ENCODE measurements at regions of chr11 and their contacts with region 1.

Region 1: GRCh38 chr11:36289226-36289852 is at the start of gene COMMD9:
- DNase-seq: peak; percentile 86 to 96 (median 94)
- ATAC-seq: peak; percentile 96
- H3K4me3 ChIP-seq: peak within 1 kb of the TSS; percentile 65 to 90
- H3K4me3 Mint-ChIP-seq: peak within 1 kb of the TSS; percentile 89
- H3K27ac ChIP-seq: peak within 1 kb of the TSS; percentile 35 to 40
- H3K27ac Mint-ChIP-seq: peak within 1 kb of the TSS; percentile 87
- H3K4me1 ChIP-seq: peaks cover 22% of the 10 kb centered on the region
- H3K4me1 Mint-ChIP-seq: peaks cover 43% of the 10 kb centered on the region
- H3K27me3 ChIP-seq: no peaks in the 10 kb centered on the region
- H3K27me3 Mint-ChIP-seq: no peaks in the 10 kb centered on the region
- CTCF ChIP-seq: no peak
- total RNA-seq, gene COMMD9: 34.1 to 38.1 TPM

Region 2: GRCh38 chr11:34916015-34916842 is 1373.1 kb before region 1 on chr11 and contains the starts of genes APIP and PDHX:
- CTCF ChIA-PET with region 1: no interaction called
- POLR2A ChIA-PET with region 1: no interaction called
- intact Hi-C with region 1: loop called in 1 of 2 experiments (anchors 5 kb)
- DNase-seq: peak; percentile 86 to 96 (median 94)
- ATAC-seq: peak; percentile 89
- H3K4me3 ChIP-seq: peak within 1 kb of the TSS; percentile 70 to 94
- H3K4me3 Mint-ChIP-seq: peak within 1 kb of the TSS; percentile 96
- H3K27ac ChIP-seq: peak within 1 kb of the TSS; percentile 57 to 72
- H3K27ac Mint-ChIP-seq: peak within 1 kb of the TSS; percentile 97
- H3K4me1 ChIP-seq: peaks cover 18% of the 10 kb centered on the region
- H3K4me1 Mint-ChIP-seq: peaks cover 53% of the 10 kb centered on the region
- H3K27me3 ChIP-seq: no peaks in the 10 kb centered on the region
- H3K27me3 Mint-ChIP-seq: no peaks in the 10 kb centered on the region
- CTCF ChIP-seq: no peak
- total RNA-seq, gene APIP: 5.4 to 6.4 TPM
- total RNA-seq, gene PDHX: 20.3 to 21.4 TPM

Region 3: DNA sequence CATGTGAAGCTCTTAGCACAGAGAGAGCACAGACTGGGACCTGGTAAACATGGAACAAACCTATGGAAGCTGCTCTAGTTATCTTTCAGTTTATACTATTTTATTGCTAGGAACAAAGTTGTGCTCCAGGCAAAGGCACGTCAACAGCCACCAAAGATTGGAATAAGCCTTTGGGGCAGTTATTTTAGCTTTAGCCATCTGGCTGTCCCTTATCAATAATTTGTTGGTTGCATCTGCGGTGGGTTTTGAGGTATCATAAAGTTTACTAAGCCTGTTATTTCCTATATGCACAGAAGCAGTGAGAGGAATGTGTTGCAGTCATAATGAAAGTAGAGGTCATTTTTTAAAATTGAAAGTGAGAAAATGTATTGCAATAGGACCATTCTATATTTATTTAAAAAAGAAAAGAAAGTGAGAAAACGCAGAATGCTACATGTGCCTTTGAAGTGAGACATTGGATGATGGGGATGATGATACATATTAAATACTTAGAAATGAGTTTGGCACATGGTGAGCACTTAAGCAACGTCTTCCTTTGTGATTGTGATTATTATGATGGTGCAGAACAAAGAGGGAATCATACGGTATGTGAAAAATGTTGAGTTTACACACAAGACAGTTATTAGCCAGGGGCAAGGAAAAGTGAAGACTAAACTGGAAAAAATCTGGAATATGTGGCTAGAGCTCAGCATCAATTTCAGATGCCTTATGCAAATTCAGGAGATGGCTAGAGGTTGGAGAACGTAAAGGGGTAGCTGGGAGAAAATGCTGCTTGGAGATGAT is 65.1 kb after region 1 on chr11:
- CTCF ChIA-PET with region 1: interaction called, 3 read pairs
- POLR2A ChIA-PET with region 1: no interaction called
- intact Hi-C with region 1: loop called in 1 of 2 experiments (anchors 5 kb)
- DNase-seq: peak in 1 of 9 experiments; percentile 18
- ATAC-seq: no peak
- H3K4me3 ChIP-seq: no peak overlapping the region
- H3K4me3 Mint-ChIP-seq: no peak overlapping the region
- H3K27ac ChIP-seq: no peak overlapping the region
- H3K27ac Mint-ChIP-seq: no peak overlapping the region
- H3K4me1 ChIP-seq: peaks cover 11% of the 10 kb centered on the region
- H3K4me1 Mint-ChIP-seq: peaks cover 28% of the 10 kb centered on the region
- H3K27me3 ChIP-seq: peaks cover 0 to 3% of the 10 kb centered on the region in 2 experiments
- H3K27me3 Mint-ChIP-seq: peaks cover 14% of the 10 kb centered on the region
- CTCF ChIP-seq: no peak

Region 4: DNA sequence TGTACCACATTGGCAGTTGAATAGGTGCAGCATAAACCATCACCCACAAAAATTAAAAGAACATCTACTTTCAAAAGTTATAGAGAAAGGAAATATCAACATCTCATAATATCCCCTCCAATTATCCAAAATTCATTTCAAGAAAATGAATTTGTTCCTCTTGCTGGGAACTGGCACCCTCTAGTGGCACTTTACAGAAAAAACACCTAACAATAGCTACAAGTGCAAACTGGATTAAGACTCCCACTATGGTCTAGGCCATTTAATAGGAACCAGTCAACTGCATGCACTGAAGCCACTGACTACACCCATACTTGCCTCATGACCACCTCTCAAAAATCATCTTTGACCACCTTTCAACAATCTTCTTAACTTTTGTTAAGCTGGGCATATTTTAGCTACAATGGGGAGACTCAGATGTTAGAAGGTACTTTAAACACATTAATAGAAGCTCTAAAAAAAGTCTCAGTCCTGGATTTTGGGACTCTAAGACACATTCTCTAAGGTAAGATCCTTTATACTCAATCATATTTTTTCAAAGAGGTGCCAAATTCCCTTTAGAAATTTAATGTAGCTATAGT is 203.5 kb after region 1 on chr11:
- CTCF ChIA-PET with region 1: interaction called, 21 read pairs
- POLR2A ChIA-PET with region 1: no interaction called
- intact Hi-C with region 1: loop called (anchors 1 kb)
- DNase-seq: peak in 4 of 9 experiments; percentile 22 to 76 (median 48)
- ATAC-seq: peak; percentile 69
- H3K4me3 ChIP-seq: no peak overlapping the region
- H3K4me3 Mint-ChIP-seq: no peak overlapping the region
- H3K27ac ChIP-seq: no peak overlapping the region
- H3K27ac Mint-ChIP-seq: no peak overlapping the region
- H3K4me1 ChIP-seq: peaks cover 8% of the 10 kb centered on the region
- H3K4me1 Mint-ChIP-seq: peaks cover 20% of the 10 kb centered on the region
- H3K27me3 ChIP-seq: no peaks in the 10 kb centered on the region
- H3K27me3 Mint-ChIP-seq: no peaks in the 10 kb centered on the region
- CTCF ChIP-seq: peak; percentile 92

Region 5: DNA sequence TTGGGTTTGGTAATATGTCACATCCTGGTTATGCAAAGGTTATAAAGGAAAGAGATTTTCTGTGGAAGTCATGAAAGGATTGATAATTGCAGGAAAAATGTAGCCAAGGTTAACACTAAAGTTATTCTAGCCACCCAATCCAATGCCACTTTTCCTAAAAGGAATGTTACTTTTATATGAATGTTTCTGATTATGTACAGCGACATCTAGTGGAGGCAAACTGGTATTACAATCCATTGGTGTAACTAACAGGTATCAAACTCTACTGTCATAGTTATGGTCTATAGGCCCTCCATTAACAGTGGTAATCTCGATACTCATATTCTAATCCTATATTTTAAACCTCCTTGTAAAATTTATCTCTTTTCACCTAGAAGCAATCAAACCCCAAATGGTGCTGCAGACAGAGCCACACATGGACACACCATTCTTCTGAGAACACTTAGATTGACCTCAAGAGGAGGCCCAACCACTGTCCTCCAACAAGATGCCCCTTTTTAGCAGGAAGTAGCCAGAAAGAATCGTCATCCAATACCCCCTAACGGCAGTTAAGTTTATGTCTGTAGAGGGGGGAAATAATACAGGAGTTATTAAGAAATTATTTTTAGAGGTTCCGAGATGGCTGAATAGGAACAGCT is 383.6 kb after region 1 on chr11:
- CTCF ChIA-PET with region 1: no interaction called
- POLR2A ChIA-PET with region 1: no interaction called
- intact Hi-C with region 1: loop called (anchors 2 to 10 kb)
- DNase-seq: peak in 3 of 9 experiments; percentile 16 to 62 (median 50)
- ATAC-seq: no peak
- H3K4me3 ChIP-seq: no peak overlapping the region
- H3K4me3 Mint-ChIP-seq: no peak overlapping the region
- H3K27ac ChIP-seq: no peak overlapping the region
- H3K27ac Mint-ChIP-seq: no peak overlapping the region
- H3K4me1 ChIP-seq: no peaks in the 10 kb centered on the region
- H3K4me1 Mint-ChIP-seq: no peaks in the 10 kb centered on the region
- H3K27me3 ChIP-seq: peaks cover 0 to 4% of the 10 kb centered on the region in 2 experiments
- H3K27me3 Mint-ChIP-seq: peaks cover 31% of the 10 kb centered on the region
- CTCF ChIP-seq: peak; percentile 97

Measured in CD8-positive, alpha-beta T cell (primary cell).